ENCODE measurements at regions of chr1 and their contacts with region 1.

Region 1: DNA sequence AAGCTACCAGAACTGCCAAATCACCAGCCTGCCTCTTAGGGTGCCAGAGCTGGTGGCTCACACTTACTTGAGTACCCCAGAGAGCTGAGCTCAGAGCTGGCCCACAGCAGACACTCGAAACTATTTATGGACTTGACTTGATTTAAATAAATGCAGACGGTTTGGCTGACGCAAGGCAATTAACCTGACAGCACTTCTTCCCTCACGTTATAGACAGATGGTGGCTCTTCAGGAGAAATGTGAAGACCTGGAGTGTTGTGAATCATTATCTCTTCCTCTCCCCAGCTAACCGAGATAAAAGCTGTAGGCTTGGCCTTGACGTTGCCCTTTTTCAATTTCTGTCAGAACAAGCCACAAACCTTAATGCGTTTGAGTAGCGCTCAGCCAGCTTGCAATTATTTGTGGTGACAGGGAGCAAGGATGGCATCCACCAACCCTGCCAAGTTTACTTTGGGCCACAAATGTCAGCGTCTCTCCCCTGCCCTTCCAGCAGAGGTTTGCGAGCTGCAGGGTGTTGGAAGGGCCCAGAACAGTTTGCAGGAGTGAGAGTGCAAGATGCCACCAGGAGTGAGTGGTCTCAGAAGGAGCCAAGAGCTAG is 34.0 kb upstream of the BCAR3 start:
- DNase-seq: peak; percentile 78
- H3K4me3 ChIP-seq: peak overlapping the region; percentile 37
- H3K27ac ChIP-seq: peak overlapping the region; percentile 77
- H3K4me1 ChIP-seq: peaks cover 62% of the 10 kb centered on the region
- CTCF ChIP-seq: no peak

Region 2: DNA sequence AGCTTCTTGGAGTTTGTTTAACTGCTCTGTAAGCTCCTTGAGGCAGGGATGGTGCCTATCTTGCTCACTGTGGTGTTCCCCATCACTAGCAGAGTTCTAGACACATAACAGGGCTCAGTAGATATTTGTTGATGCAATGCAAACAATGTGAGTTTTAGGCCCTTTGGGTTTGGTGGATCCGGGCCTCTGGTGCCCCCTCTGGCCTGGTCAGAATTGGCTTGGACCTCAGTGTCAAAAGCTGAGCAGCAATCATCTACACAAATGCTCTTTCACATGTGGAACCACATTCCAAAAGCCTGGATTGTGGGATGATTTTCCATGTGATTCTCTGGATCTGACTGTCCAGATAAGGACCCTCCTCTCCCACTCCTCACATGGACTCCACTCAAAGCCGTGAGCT is 19.4 kb after region 1 on chr1:
- CTCF ChIA-PET with region 1: interaction called, 4 read pairs
- POLR2A ChIA-PET with region 1: interaction called, 10 read pairs
- intact Hi-C with region 1: no loop called
- DNase-seq: peak; percentile 45
- H3K4me3 ChIP-seq: no peak overlapping the region
- H3K27ac ChIP-seq: no peak overlapping the region
- H3K4me1 ChIP-seq: peaks cover 34% of the 10 kb centered on the region
- CTCF ChIP-seq: peak; percentile 76

Region 3: GRCh38 chr1:93964777-93965200 is 249.2 kb after region 1 on chr1:
- CTCF ChIA-PET with region 1: no interaction called
- POLR2A ChIA-PET with region 1: no interaction called
- intact Hi-C with region 1: no loop called
- DNase-seq: no peak
- H3K4me3 ChIP-seq: no peak overlapping the region
- H3K27ac ChIP-seq: no peak overlapping the region
- H3K4me1 ChIP-seq: no peaks in the 10 kb centered on the region
- CTCF ChIP-seq: no peak

Measured in OCI-LY7 (cell line).